Ovary (tissue), 10 donors: ENCODE measurements at regions of chr10 and their contacts with region 1.

Region 1: GRCh38 chr10:78302989-78303854 is 269.6 kb downstream of the RPS24 start:
- DNase-seq: peak; percentile 92 to 99 (median 96)
- H3K4me3 ChIP-seq: peak overlapping the region; percentile 48
- H3K27ac ChIP-seq: peak overlapping the region; percentile 18 to 68
- H3K4me1 ChIP-seq: peaks cover 7% of the 10 kb centered on the region
- H3K27me3 ChIP-seq: no peaks in the 10 kb centered on the region
- CTCF ChIP-seq: peak; percentile 50 to 91 (median 89)
- EP300 ChIP-seq: no peak
- POLR2A ChIP-seq: no peak

Region 2: GRCh38 chr10:78047314-78047891 is 255.8 kb before region 1 on chr10:
- intact Hi-C with region 1: loop called in 1 of 4 experiments (anchors 5 kb)
- DNase-seq: peak; percentile 83 to 92 (median 91)
- H3K4me3 ChIP-seq: no peak overlapping the region
- H3K27ac ChIP-seq: no peak overlapping the region
- H3K4me1 ChIP-seq: no peaks in the 10 kb centered on the region
- H3K27me3 ChIP-seq: no peaks in the 10 kb centered on the region
- CTCF ChIP-seq: peak; percentile 77 to 83 (median 78)
- EP300 ChIP-seq: no peak
- POLR2A ChIP-seq: no peak

Region 3: GRCh38 chr10:78211561-78212051 is 91.6 kb before region 1 on chr10:
- intact Hi-C with region 1: loop called in 1 of 4 experiments (anchors 10 kb)
- DNase-seq: peak; percentile 52 to 69 (median 58)
- H3K4me3 ChIP-seq: no peak overlapping the region
- H3K27ac ChIP-seq: no peak overlapping the region
- H3K4me1 ChIP-seq: peaks cover 14% of the 10 kb centered on the region
- H3K27me3 ChIP-seq: no peaks in the 10 kb centered on the region
- CTCF ChIP-seq: peak in 2 of 3 donors; percentile 35 to 43
- EP300 ChIP-seq: no peak
- POLR2A ChIP-seq: no peak

Region 4: GRCh38 chr10:78972947-78973900 is 670.0 kb after region 1 on chr10:
- intact Hi-C with region 1: loop called in 1 of 4 experiments (anchors 5 kb)
- DNase-seq: peak in 4 of 5 donors; percentile 66 to 86 (median 79)
- H3K4me3 ChIP-seq: peak overlapping the region; percentile 50
- H3K27ac ChIP-seq: peak overlapping the region; percentile 92 to 95
- H3K4me1 ChIP-seq: peaks cover 26% of the 10 kb centered on the region
- H3K27me3 ChIP-seq: no peaks in the 10 kb centered on the region
- CTCF ChIP-seq: peak in 1 of 3 donors; percentile 35
- EP300 ChIP-seq: no peak
- POLR2A ChIP-seq: peak; percentile 34